ENCODE measurements at regions of chr6 and their contacts with region 1.

Region 1: GRCh38 chr6:43769526-43770416 is at the start of gene VEGFA:
- DNase-seq: peak; percentile 85 to 93
- ATAC-seq: peak; percentile 79 to 92 (median 83)
- H3K4me3 ChIP-seq: peak within 1 kb of the TSS; percentile 45
- H3K4me3 Mint-ChIP-seq: peak within 1 kb of the TSS; percentile 97
- H3K27ac ChIP-seq: no peak within 1 kb of the TSS
- H3K27ac Mint-ChIP-seq: peak within 1 kb of the TSS; percentile 43 to 80
- H3K4me1 ChIP-seq: peaks cover 28% of the 10 kb centered on the region
- H3K4me1 Mint-ChIP-seq: peaks cover 10 to 25% of the 10 kb centered on the region in 2 donors
- H3K27me3 ChIP-seq: peaks cover 26% of the 10 kb centered on the region
- H3K27me3 Mint-ChIP-seq: peaks cover 7 to 35% of the 10 kb centered on the region in 2 donors
- CTCF ChIP-seq: peak; percentile 95
- total RNA-seq, gene VEGFA: 3.6 to 27.5 (median 3.7) TPM

Region 2: GRCh38 chr6:43667245-43668150 is 102.3 kb before region 1 on chr6:
- intact Hi-C with region 1: loop called (anchors 5 kb)
- DNase-seq: peak; percentile 80 to 88
- ATAC-seq: peak; percentile 77 to 88 (median 82)
- H3K4me3 ChIP-seq: no peak overlapping the region
- H3K4me3 Mint-ChIP-seq: no peak overlapping the region
- H3K27ac ChIP-seq: no peak overlapping the region
- H3K27ac Mint-ChIP-seq: peak overlapping the region in 1 of 2 donors; percentile 79
- H3K4me1 ChIP-seq: peaks cover 17% of the 10 kb centered on the region
- H3K4me1 Mint-ChIP-seq: peaks cover 6 to 14% of the 10 kb centered on the region in 2 donors
- H3K27me3 ChIP-seq: no peaks in the 10 kb centered on the region
- H3K27me3 Mint-ChIP-seq: no peaks in the 10 kb centered on the region
- CTCF ChIP-seq: peak; percentile 83

Region 3: DNA sequence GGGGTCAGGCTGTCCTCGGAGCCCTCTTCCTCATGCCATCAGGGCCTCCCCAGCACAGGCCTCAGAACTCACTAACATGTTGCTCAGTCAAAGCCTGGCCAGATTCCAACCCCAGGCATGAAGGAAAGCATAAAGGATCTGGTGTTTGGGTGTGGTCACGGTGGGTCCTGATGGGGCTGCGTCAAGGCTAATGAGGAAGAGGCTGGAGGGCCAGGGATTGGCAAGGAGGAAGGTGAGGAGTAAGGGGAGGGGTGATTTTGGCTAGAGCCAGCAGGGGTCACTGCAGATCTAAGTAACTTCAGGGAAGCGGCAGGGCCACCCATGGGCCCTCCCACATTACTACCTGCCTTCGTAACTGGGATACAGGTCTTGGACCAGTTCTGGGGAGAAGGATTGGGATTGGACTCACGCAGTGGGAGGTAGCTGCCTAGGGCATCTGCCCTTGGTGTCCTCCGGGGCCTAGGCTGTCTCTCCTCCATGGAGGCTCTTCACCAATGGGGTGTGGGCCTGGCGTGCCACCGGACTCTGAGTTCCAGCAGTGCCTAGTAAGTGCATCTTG is 46.0 kb before region 1 on chr6:
- intact Hi-C with region 1: loop called (anchors 2 kb)
- DNase-seq: peak; percentile 57 to 85
- ATAC-seq: peak; percentile 68 to 77 (median 72)
- H3K4me3 ChIP-seq: no peak overlapping the region
- H3K4me3 Mint-ChIP-seq: no peak overlapping the region
- H3K27ac ChIP-seq: no peak overlapping the region
- H3K27ac Mint-ChIP-seq: peak overlapping the region in 1 of 2 donors; percentile 82
- H3K4me1 ChIP-seq: peaks cover 25% of the 10 kb centered on the region
- H3K4me1 Mint-ChIP-seq: peaks cover 14 to 25% of the 10 kb centered on the region in 2 donors
- H3K27me3 ChIP-seq: no peaks in the 10 kb centered on the region
- H3K27me3 Mint-ChIP-seq: peaks cover 11 to 18% of the 10 kb centered on the region in 2 donors
- CTCF ChIP-seq: peak; percentile 58

Region 4: DNA sequence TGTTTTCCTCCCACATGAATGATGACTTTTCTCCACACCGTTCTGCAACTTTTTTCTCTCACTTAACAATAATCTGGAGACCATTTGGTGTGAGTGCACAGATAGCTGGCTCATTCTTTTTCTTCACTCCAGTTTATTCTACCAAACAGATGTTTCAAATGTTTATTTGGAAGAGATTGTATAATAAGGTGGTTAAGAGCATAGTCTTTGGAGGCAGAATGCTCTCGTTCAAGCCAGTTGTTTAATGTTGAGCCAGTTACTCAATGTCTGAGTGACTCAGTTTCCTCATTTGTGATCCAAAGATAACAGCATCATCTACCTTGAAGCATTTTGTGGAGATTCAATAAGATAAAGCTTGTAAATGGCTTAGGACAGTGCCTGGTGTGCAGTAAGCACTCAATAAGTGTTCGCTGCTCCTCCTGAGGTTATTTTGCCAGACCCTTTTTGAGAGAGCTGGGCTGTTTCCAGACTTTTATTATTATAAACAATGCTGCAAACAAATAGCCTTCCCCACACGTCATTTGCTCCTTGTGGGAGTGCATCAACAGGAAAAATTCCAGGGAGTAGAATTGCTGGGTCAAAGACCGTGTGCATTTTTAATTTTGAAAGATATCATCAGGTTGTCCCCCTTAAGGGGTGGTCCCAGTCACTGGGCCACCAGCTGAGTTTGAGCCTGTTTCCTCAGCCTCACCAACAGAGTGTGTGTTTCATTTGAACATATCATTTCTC is 70.9 kb after region 1 on chr6:
- intact Hi-C with region 1: loop called (anchors 2 kb)
- DNase-seq: no peak
- ATAC-seq: no peak
- H3K4me3 ChIP-seq: no peak overlapping the region
- H3K4me3 Mint-ChIP-seq: no peak overlapping the region
- H3K27ac ChIP-seq: no peak overlapping the region
- H3K27ac Mint-ChIP-seq: no peak overlapping the region
- H3K4me1 ChIP-seq: no peaks in the 10 kb centered on the region
- H3K4me1 Mint-ChIP-seq: no peaks in the 10 kb centered on the region
- H3K27me3 ChIP-seq: no peaks in the 10 kb centered on the region
- H3K27me3 Mint-ChIP-seq: peaks cover 3 to 12% of the 10 kb centered on the region in 2 donors
- CTCF ChIP-seq: no peak

Measured in natural killer cell (primary cell).